ENCODE measurements at regions of chr17 and their contacts with region 1.

Region 1: GRCh38 chr17:74961657-74962490 is 10.7 kb downstream of the HID1 start:
- DNase-seq: peak; percentile 90 to 93
- H3K4me3 ChIP-seq: no peak overlapping the region
- H3K4me3 Mint-ChIP-seq: no peak overlapping the region
- H3K27ac Mint-ChIP-seq: no peak overlapping the region
- H3K4me1 ChIP-seq: 0 out of 2 replicates have a peak, but pooled peaks cover 3% of the 10 kb centered on the region
- H3K4me1 Mint-ChIP-seq: peaks cover 21% of the 10 kb centered on the region
- H3K27me3 ChIP-seq: no peaks in the 10 kb centered on the region
- H3K27me3 Mint-ChIP-seq: no peaks in the 10 kb centered on the region
- CTCF ChIP-seq: peak; percentile 70 to 86

Region 2: DNA sequence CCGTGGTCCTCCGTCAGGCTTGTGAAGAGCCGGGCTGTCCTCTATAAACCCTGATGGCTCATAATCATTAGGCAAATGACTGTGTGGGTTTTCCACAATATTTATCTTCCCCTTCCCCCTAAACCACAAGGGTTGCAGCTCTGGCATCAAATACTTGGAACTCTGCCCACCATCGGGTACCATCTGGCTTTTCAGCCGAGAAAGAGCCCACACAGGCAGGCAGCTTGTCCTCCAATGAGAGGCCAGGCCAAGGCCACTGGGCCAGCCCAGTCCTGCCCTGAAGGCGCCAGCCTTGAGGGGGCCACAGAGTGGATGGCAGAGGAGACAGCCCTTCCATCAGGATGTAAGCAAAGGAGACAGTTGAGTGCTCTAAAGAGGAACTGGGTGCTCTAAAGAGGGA is 153.9 kb before region 1 on chr17:
- CTCF ChIA-PET with region 1: no interaction called
- POLR2A ChIA-PET with region 1: no interaction called
- intact Hi-C with region 1: no loop called
- DNase-seq: no peak
- H3K4me3 ChIP-seq: no peak overlapping the region
- H3K4me3 Mint-ChIP-seq: no peak overlapping the region
- H3K27ac Mint-ChIP-seq: no peak overlapping the region
- H3K4me1 ChIP-seq: no peaks in the 10 kb centered on the region
- H3K4me1 Mint-ChIP-seq: no peaks in the 10 kb centered on the region
- H3K27me3 ChIP-seq: no peaks in the 10 kb centered on the region
- H3K27me3 Mint-ChIP-seq: no peaks in the 10 kb centered on the region
- CTCF ChIP-seq: no peak

Region 3: GRCh38 chr17:74852237-74853047 is 109.4 kb before region 1 on chr17:
- CTCF ChIA-PET with region 1: interaction called, 13 read pairs
- POLR2A ChIA-PET with region 1: no interaction called
- intact Hi-C with region 1: no loop called
- DNase-seq: peak; percentile 93 to 94
- H3K4me3 ChIP-seq: peak overlapping the region; percentile 62
- H3K4me3 Mint-ChIP-seq: peak overlapping the region; percentile 82
- H3K27ac Mint-ChIP-seq: peak overlapping the region; percentile 63
- H3K4me1 ChIP-seq: peaks cover 8% of the 10 kb centered on the region
- H3K4me1 Mint-ChIP-seq: peaks cover 7% of the 10 kb centered on the region
- H3K27me3 ChIP-seq: 0 out of 2 replicates have a peak, but pooled peaks cover 2% of the 10 kb centered on the region
- H3K27me3 Mint-ChIP-seq: peaks cover 16% of the 10 kb centered on the region
- CTCF ChIP-seq: no peak

Region 4: GRCh38 chr17:74923533-74924249 is 38.2 kb before region 1 on chr17:
- CTCF ChIA-PET with region 1: interaction called, 46 read pairs
- POLR2A ChIA-PET with region 1: no interaction called
- intact Hi-C with region 1: loop called (anchors 1 kb)
- DNase-seq: peak; percentile 62 to 89
- H3K4me3 ChIP-seq: peak overlapping the region; percentile 49
- H3K4me3 Mint-ChIP-seq: peak overlapping the region; percentile 71
- H3K27ac Mint-ChIP-seq: no peak overlapping the region
- H3K4me1 ChIP-seq: peaks cover 6% of the 10 kb centered on the region; the same call in 1 of the 2 replicates
- H3K4me1 Mint-ChIP-seq: no peaks in the 10 kb centered on the region
- H3K27me3 ChIP-seq: peaks cover 1% of the 10 kb centered on the region; the same call in 1 of the 2 replicates
- H3K27me3 Mint-ChIP-seq: peaks cover 25% of the 10 kb centered on the region
- CTCF ChIP-seq: peak; percentile 88 to 97

Region 5: GRCh38 chr17:74981979-74982662 is 20.2 kb after region 1 on chr17:
- CTCF ChIA-PET with region 1: interaction called, 29 read pairs
- POLR2A ChIA-PET with region 1: interaction called, 18 read pairs
- intact Hi-C with region 1: loop called (anchors 1 kb)
- DNase-seq: peak; percentile 89 to 93
- H3K4me3 ChIP-seq: peak overlapping the region; percentile 58
- H3K4me3 Mint-ChIP-seq: peak overlapping the region; percentile 95
- H3K27ac Mint-ChIP-seq: peak overlapping the region; percentile 88
- H3K4me1 ChIP-seq: peaks cover 13% of the 10 kb centered on the region
- H3K4me1 Mint-ChIP-seq: peaks cover 7% of the 10 kb centered on the region
- H3K27me3 ChIP-seq: no peaks in the 10 kb centered on the region
- H3K27me3 Mint-ChIP-seq: no peaks in the 10 kb centered on the region
- CTCF ChIP-seq: no peak

Region 6: DNA sequence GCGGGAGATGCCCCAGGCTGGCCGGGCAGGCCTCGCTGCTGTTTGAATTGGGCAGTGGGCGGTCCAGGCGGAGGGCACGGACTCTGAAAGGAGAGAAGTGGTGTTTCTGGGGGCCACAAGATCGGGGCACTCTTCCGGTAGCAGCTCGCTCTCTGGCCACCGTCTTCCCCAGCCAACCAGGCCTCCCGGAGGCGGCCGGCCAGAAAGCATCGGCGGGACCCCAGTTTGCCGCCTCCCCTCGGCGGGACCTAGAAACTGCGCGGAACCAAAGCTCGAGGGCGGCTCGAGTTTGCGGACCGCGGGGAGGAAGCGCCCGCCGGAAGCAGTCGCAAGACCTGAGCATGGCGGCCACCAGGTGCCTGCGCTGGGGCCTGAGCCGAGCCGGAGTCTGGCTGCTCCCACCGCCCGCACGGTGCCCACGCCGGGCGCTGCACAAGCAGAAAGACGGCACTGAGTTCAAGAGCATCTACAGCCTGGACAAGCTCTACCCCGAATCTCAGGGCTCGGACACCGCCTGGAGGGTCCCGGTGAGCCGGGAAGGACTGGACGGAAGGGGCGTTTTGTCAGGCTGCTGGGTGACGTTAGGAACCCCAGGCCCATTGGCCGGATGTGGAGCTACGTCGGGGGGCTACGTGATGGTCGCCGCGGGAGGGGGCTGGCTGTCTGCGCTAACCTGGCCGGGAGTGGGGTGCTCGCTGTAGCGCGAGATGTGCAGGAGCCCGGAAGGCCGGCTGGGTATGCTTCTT is 50.6 kb after region 1 on chr17 and contains the start of gene MRPL58:
- CTCF ChIA-PET with region 1: interaction called, 86 read pairs
- POLR2A ChIA-PET with region 1: interaction called, 13 read pairs
- intact Hi-C with region 1: loop called (anchors 1 kb)
- DNase-seq: peak; percentile 88 to 92
- H3K4me3 ChIP-seq: peak within 1 kb of the TSS; percentile 84
- H3K4me3 Mint-ChIP-seq: peak within 1 kb of the TSS; percentile 82
- H3K27ac Mint-ChIP-seq: peak within 1 kb of the TSS; percentile 84
- H3K4me1 ChIP-seq: peaks cover 3% of the 10 kb centered on the region; the same call in 1 of the 2 replicates
- H3K4me1 Mint-ChIP-seq: peaks cover 29% of the 10 kb centered on the region
- H3K27me3 ChIP-seq: no peaks in the 10 kb centered on the region
- H3K27me3 Mint-ChIP-seq: no peaks in the 10 kb centered on the region
- CTCF ChIP-seq: peak; percentile 68 to 79
- total RNA-seq, gene MRPL58: 61.0 and 61.8 TPM in 2 replicates

Region 7: GRCh38 chr17:75059369-75060345 is 97.8 kb after region 1 on chr17:
- CTCF ChIA-PET with region 1: interaction called, 12 read pairs
- POLR2A ChIA-PET with region 1: no interaction called
- intact Hi-C with region 1: no loop called
- DNase-seq: peak in 1 of 2 experiments; percentile 49
- H3K4me3 ChIP-seq: no peak overlapping the region
- H3K4me3 Mint-ChIP-seq: no peak overlapping the region
- H3K27ac Mint-ChIP-seq: no peak overlapping the region
- H3K4me1 ChIP-seq: peaks cover 13% of the 10 kb centered on the region; the same call in 1 of the 2 replicates
- H3K4me1 Mint-ChIP-seq: peaks cover 9% of the 10 kb centered on the region
- H3K27me3 ChIP-seq: no peaks in the 10 kb centered on the region
- H3K27me3 Mint-ChIP-seq: no peaks in the 10 kb centered on the region
- CTCF ChIP-seq: peak; percentile 49 to 53